Activated CD4-positive, alpha-beta memory T cell treated with anti-CD3 and anti-CD28 coated beads for 36 hours (primary cell): ENCODE measurements at regions of chr20 and their contacts with region 1.

Region 1: GRCh38 chr20:645318-646106 is 7.5 kb downstream of the SRXN1 start:
- DNase-seq: peak; percentile 83
- H3K4me3 Mint-ChIP-seq: no peak overlapping the region
- H3K27ac Mint-ChIP-seq: no peak overlapping the region
- H3K4me1 Mint-ChIP-seq: peaks cover 16% of the 10 kb centered on the region
- H3K27me3 Mint-ChIP-seq: peaks cover 13% of the 10 kb centered on the region

Region 2: DNA sequence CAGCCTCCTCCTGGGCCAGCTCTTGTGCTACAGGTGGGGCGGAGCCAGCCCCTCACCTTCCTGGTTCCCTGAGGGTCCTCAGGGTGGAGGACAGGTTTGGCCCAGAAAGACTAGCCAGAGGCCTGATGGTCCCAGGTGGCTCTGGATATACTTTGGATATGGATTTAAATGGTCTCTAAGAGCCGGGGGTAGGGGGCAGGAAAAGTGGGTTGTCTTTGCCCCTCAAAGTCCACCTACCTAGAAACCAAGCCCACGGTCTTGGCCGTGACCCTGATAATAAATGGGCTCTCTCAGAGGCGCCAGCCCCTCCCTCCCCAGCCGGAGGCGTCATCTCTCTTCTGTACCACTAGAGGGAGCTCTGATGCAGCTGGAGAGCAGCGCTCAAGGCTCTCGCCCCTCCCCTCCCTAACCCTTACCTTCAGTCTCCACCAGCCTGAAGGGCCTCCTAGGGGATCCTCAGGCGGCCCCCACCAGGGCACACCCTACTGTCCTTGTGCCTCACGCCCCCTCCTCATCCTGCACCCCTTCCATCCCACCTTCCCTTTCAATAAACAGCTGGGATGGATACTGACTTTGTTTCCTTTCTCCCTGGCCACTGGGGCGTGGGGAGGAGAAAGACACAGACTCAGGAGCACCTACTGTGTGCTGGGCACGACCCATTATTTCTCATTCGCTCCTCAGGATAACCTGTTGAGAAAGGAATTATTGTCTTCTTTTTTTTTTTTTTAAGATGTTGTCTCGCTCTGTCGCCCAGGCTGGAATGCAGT is 291.0 kb before region 1 on chr20:
- CTCF ChIA-PET with region 1: interaction called, 11 read pairs
- POLR2A ChIA-PET with region 1: no interaction called
- intact Hi-C with region 1: loop called (anchors 2 kb)
- DNase-seq: peak; percentile 87
- H3K4me3 Mint-ChIP-seq: no peak overlapping the region
- H3K27ac Mint-ChIP-seq: no peak overlapping the region
- H3K4me1 Mint-ChIP-seq: no peaks in the 10 kb centered on the region
- H3K27me3 Mint-ChIP-seq: no peaks in the 10 kb centered on the region

Region 3: GRCh38 chr20:549722-550496 is 95.6 kb before region 1 on chr20:
- CTCF ChIA-PET with region 1: interaction called, 16 read pairs
- POLR2A ChIA-PET with region 1: no interaction called
- intact Hi-C with region 1: no loop called
- DNase-seq: no peak
- H3K4me3 Mint-ChIP-seq: no peak overlapping the region
- H3K27ac Mint-ChIP-seq: no peak overlapping the region
- H3K4me1 Mint-ChIP-seq: no peaks in the 10 kb centered on the region
- H3K27me3 Mint-ChIP-seq: peaks cover 22% of the 10 kb centered on the region

Region 4: GRCh38 chr20:571754-572441 is 73.6 kb before region 1 on chr20:
- CTCF ChIA-PET with region 1: interaction called, 10 read pairs
- POLR2A ChIA-PET with region 1: no interaction called
- intact Hi-C with region 1: no loop called
- DNase-seq: no peak
- H3K4me3 Mint-ChIP-seq: no peak overlapping the region
- H3K27ac Mint-ChIP-seq: no peak overlapping the region
- H3K4me1 Mint-ChIP-seq: no peaks in the 10 kb centered on the region
- H3K27me3 Mint-ChIP-seq: peaks cover 39% of the 10 kb centered on the region

Region 5: GRCh38 chr20:621125-621756 is 24.3 kb before region 1 on chr20:
- CTCF ChIA-PET with region 1: interaction called, 15 read pairs
- POLR2A ChIA-PET with region 1: no interaction called
- intact Hi-C with region 1: no loop called
- DNase-seq: no peak
- H3K4me3 Mint-ChIP-seq: no peak overlapping the region
- H3K27ac Mint-ChIP-seq: no peak overlapping the region
- H3K4me1 Mint-ChIP-seq: no peaks in the 10 kb centered on the region
- H3K27me3 Mint-ChIP-seq: peaks cover 32% of the 10 kb centered on the region

Region 6: GRCh38 chr20:667391-667964 is 22.0 kb after region 1 on chr20:
- CTCF ChIA-PET with region 1: interaction called, 25 read pairs
- POLR2A ChIA-PET with region 1: no interaction called
- intact Hi-C with region 1: no loop called
- DNase-seq: peak; percentile 75
- H3K4me3 Mint-ChIP-seq: no peak overlapping the region
- H3K27ac Mint-ChIP-seq: no peak overlapping the region
- H3K4me1 Mint-ChIP-seq: peaks cover 5% of the 10 kb centered on the region
- H3K27me3 Mint-ChIP-seq: peaks cover 55% of the 10 kb centered on the region

Region 7: DNA sequence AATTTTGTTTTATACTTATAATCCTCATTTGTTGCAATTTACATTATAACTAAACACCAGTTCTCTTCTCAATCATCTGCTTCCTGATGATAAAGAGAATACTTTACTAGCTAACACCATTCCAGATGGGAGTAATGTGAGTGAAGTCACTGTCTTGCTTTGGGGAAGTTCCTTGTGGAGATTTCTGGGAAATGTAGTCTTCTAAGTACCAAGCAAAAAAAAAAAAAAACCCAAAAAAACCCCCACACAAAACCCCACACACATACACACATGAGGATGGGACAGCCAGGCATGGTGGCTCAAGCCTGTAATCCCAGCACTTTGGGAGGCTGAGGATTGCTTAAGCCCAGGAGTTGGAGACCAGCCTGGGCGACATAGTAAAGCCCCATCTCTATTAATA is 618.3 kb after region 1 on chr20:
- CTCF ChIA-PET with region 1: no interaction called
- POLR2A ChIA-PET with region 1: no interaction called
- intact Hi-C with region 1: no loop called
- DNase-seq: no peak
- H3K4me3 Mint-ChIP-seq: no peak overlapping the region
- H3K27ac Mint-ChIP-seq: no peak overlapping the region
- H3K4me1 Mint-ChIP-seq: peaks cover 42% of the 10 kb centered on the region
- H3K27me3 Mint-ChIP-seq: peaks cover 3% of the 10 kb centered on the region